PC-9 (cell line): ENCODE measurements at regions of chr1 and their contacts with region 1.

Region 1: GRCh38 chr1:1989102-1989542 is 14.5 kb downstream of the CFAP74 start:
- DNase-seq: peak in 1 of 2 experiments; percentile 17
- H3K4me3 ChIP-seq: no peak overlapping the region
- H3K27ac ChIP-seq: no peak overlapping the region
- H3K4me1 ChIP-seq: no peaks in the 10 kb centered on the region
- H3K27me3 ChIP-seq: peaks cover 36% of the 10 kb centered on the region
- CTCF ChIP-seq: no peak

Region 2: DNA sequence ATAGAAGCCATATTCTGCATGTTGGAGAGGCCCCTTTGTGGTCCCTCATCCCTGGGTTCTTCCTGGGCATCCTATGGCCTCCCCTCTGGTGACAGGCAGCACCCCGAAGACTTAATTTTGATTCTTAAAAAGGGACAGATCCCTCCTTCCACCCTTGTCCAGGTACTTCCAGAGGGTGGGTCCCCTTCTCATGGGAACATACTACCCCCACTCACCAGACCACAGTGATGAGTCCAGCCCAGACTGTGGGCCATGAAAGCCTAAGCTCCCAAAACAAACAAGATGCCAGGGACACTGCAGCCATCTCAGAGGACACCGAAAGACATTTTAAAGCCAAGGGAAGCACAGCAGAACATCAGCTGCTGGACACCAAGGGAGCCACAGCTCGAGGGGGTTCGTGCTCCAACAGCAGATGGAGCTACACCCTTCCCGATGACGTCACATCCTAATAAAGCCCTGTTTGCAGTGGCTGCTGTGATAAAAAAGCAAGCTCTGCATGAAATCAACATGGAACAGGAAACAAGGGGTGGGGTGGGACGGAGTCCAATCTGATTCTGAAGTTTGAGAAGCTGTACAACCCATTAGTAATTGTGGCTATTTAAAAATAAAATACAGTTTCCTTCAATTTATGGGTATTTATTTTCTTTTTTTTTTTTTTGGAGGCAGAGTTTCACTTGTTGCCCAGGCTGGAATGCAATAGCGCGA is 130.6 kb before region 1 on chr1:
- CTCF ChIA-PET with region 1: no interaction called
- POLR2A ChIA-PET with region 1: no interaction called
- intact Hi-C with region 1: no loop called
- DNase-seq: peak in 1 of 2 experiments; percentile 28
- H3K4me3 ChIP-seq: no peak overlapping the region
- H3K27ac ChIP-seq: 0 out of 2 replicates have a peak overlapping the region, but pooled peaks have one; percentile 9
- H3K4me1 ChIP-seq: peaks cover 17% of the 10 kb centered on the region; the same call in 1 of the 2 replicates
- H3K27me3 ChIP-seq: no peaks in the 10 kb centered on the region
- CTCF ChIP-seq: no peak

Region 3: DNA sequence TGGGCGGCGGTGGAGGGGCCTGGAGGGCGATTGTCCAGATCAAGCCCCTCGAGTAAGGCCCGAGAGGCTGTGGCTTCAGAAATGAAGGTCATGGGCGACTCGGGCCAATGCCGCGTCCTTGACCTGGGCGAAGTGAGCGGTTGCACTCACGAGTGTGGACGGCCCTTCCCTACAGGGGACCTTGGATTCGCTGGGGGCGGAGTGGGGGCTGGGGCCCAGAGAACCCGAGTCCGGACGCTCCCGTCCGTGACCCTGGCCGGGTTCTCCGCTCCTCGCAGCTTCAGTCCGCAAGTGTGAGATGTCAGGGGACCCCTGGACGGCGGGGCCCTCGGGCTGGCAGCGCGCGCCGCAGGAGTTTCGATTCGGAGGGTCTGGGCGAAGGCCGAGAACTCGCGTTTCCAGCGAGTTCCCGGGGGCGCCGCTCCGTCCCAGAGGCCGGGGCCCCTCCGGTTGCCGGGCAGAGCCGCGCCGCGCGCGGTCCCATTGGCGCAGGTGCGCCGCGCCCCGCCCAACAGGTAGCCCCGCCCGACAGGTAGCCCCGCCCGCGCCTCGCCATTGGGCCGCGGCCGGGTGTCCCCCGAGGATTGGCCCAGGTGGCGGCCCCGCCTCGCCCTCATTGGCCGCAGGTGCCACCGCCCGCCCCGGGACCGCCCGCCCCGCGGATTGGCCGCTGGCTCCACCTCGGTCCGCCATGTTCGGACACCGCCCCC is 60.8 kb after region 1 on chr1 and contains the start of gene PRKCZ:
- CTCF ChIA-PET with region 1: interaction called, 18 read pairs
- POLR2A ChIA-PET with region 1: no interaction called
- intact Hi-C with region 1: no loop called
- DNase-seq: peak; percentile 80 to 98
- H3K4me3 ChIP-seq: peak within 1 kb of the TSS; percentile 79
- H3K27ac ChIP-seq: peak within 1 kb of the TSS; percentile 56
- H3K4me1 ChIP-seq: 0 out of 2 replicates have a peak, but pooled peaks cover 5% of the 10 kb centered on the region
- H3K27me3 ChIP-seq: no peaks in the 10 kb centered on the region
- CTCF ChIP-seq: peak; percentile 6
- total RNA-seq, gene PRKCZ: 36.0 and 36.2 TPM in 2 replicates

Region 4: GRCh38 chr1:2127187-2128145 is 138.3 kb after region 1 on chr1:
- CTCF ChIA-PET with region 1: no interaction called
- POLR2A ChIA-PET with region 1: no interaction called
- intact Hi-C with region 1: no loop called
- DNase-seq: no peak
- H3K4me3 ChIP-seq: no peak overlapping the region
- H3K27ac ChIP-seq: no peak overlapping the region
- H3K4me1 ChIP-seq: peaks cover 13% of the 10 kb centered on the region
- H3K27me3 ChIP-seq: no peaks in the 10 kb centered on the region
- CTCF ChIP-seq: no peak

Region 5: DNA sequence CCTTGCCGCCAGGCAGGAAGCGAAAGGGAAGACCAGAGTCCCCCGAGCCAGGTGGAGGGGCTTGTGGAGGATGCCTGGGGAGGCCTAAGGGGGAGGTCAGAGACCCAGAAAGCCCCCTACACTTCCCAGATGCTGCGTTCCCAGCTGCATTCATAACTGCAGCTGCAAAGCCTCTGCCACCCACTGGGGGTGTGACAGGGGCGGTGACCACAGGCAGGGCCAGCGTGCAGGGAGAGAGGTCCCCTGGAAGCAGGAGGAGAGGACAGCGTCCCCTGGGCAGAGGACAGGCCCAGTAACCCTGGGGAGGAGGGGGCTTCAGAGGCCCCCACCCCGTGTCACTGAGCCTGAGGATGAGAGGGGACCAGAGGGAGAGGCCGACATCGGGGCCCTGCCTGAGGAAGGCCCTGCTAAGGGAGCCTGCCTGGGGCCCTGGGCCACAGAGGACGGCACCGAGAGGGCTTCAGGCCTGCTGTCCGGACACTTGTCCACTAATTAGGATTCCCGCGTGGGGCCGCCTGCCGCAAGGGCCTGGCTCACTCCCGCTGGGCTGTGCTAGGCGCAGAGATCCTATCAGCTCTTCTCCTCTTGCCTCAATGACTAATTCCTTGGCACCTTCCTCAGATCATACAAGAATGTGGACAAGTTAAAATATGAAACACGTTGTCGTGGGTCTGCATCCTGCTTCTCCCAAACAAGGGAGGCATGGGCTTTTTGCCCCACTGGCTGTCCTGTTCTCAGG is 1714.0 kb after region 1 on chr1:
- CTCF ChIA-PET with region 1: no interaction called
- POLR2A ChIA-PET with region 1: interaction called, 37 read pairs
- intact Hi-C with region 1: no loop called
- DNase-seq: peak in 1 of 2 experiments; percentile 72
- H3K4me3 ChIP-seq: no peak overlapping the region
- H3K27ac ChIP-seq: no peak overlapping the region
- H3K4me1 ChIP-seq: peaks cover 38% of the 10 kb centered on the region
- H3K27me3 ChIP-seq: peaks cover 28% of the 10 kb centered on the region
- CTCF ChIP-seq: no peak